Posterior vena cava (tissue), 2 donors: ENCODE measurements at regions of chr2 and their contacts with region 1.

Region 1: DNA sequence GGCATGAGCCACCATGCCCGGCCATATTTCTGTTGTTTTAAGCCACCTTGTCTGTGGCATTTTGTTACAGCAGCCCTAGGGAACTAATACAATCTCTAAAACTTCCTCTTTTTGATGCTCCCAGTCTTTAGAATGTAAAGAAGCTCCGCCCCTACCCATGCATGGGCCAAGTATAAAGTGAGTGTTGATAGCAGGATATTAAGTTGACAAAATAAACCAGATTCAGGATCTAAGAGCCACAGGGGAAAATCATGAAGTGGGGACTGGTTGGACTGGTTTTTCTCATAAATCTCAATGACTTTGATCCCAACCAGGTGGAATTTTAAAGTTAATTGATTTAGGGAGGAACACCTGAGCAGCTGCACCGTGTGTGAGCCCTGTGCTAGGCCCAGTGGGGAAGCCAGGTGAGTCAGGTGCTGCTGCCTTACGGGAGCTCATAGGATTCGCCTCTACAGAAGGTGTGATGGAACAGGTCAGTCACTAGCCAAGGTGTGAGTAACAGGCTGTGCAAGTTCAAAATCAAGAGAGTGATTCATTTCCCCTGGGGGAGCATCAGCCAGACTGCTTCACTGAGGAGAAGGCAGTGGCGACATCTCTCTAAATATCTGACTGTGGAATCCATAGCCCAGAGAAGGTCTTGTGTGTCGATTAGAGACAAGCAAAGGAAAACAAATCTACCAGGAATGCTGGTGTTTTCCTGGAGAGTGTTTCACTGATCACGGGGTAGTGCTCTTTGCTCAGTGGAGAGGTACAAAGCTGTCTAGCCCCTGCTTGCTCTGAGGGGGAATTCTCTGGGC is 63.0 kb upstream of the MSH2 start:
- DNase-seq: no peak

Region 2: DNA sequence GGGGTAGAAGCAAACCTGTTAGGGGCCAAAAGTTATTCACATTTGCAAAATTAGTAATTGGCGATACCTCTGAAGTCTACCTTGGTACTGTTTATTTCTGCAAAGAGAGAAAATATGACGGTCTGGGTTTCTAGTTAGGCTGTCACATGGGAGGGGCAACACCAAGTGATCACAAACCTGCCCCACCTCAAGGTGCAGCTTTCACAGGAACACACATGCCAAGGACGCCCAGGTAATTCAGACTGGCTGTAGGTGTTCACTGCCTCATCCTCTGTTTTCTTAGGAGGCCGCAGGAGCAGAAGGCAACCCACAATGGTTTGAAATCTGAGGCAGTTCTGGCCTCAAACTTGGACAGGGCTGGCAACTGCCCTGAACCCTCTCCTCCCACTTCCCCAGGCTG is 241.0 kb before region 1 on chr2:
- intact Hi-C with region 1: no loop called
- DNase-seq: no peak

Region 3: DNA sequence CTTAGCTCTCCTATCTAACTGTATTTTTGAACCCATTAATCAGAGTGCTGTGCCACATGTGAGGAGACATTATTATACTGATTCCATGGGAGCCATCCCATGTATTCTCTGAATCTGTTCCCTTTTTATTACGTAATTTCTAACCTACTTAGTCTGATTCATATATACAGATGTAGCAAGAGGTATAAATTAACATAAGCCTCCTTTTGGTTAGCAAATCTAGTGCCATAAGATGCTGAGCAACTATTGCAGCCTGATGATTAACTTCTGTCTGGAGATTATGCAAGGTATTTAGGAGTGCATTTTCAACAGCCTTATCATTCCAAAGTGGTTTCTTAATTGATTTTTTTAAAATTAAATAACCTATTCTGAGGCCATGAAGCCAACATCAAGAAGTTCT is 51.1 kb before region 1 on chr2:
- intact Hi-C with region 1: no loop called
- DNase-seq: no peak

Region 4: DNA sequence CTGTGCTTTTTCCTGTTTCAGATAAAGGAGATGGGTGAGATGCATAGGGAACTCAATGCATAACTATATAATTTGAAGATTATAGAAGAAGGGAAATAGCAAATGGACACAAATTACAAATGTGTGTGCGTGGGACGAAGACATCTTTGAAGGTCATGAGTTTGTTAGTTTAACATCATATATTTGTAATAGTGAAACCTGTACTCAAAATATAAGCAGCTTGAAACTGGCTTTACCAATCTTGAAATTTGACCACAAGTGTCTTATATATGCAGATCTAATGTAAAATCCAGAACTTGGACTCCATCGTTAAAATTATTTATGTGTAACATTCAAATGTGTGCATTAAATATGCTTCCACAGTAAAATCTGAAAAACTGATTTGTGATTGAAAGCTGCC is 46.6 kb after region 1 on chr2:
- intact Hi-C with region 1: loop called (anchors 2 to 5 kb)
- DNase-seq: no peak